ENCODE measurements at regions of chr7 and their contacts with region 1.

Region 1: GRCh38 chr7:149414745-149415390 is 46.0 kb downstream of the ZNF777 start:
- DNase-seq: no peak

Region 2: DNA sequence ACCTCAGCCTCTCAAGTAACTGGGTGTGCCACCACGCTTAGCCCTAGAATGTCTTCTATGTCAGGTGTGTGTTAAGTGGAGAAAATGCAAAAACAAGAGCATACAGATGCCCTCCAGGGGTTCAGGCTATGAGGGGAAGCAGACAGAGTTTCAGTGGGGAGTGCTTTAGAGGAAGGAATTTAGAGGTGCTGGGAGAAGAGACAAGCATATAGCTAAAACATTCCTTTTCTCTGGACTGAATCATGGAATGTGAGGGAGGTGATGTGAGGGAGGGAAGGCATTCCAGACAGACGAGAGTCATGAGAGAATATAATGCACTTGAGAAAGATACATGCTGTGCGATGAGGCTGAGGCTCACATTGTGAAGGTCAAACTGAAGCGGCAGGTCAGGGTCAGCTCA is 317.8 kb before region 1 on chr7:
- intact Hi-C with region 1: no loop called
- DNase-seq: peak; percentile 12

Region 3: GRCh38 chr7:149166142-149166541 is 248.7 kb before region 1 on chr7:
- intact Hi-C with region 1: no loop called
- DNase-seq: no peak

Region 4: GRCh38 chr7:149310113-149310836 is 104.6 kb before region 1 on chr7:
- intact Hi-C with region 1: loop called (anchors 10 kb)
- DNase-seq: no peak

Region 5: DNA sequence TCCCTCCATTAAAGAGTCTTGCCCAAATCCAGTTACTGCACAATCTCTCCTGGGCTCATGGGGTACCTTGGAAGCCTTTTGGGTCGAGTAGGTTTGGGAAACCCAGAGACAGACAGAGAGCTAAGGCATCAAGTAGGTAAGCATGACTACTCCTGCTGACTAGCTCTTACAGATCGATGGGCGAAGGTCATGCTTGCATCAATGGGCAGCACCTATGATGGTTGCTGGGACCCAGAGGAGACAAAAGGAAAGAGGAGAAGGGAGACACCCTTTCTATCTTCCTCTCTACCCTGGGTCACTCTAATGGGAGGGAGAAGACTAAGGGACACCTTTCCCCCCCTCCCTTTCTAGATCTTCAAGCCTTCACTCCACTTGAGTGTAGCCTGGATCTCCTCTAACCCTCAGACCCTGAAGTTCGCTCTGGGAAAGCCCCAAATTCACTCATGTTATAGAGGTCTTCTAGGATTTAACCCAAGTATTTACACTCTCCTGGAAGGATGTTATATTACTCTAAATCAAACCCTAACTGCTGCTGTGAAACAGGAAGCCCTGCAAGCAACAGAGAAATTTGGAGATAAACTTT is 114.4 kb after region 1 on chr7:
- intact Hi-C with region 1: no loop called
- DNase-seq: no peak